Activated CD4-positive, alpha-beta memory T cell treated with anti-CD3 and anti-CD28 coated beads, Interleukin-2, amount 10 ng/mL, durations not matched to agents 7 days and 5 days (primary cell): ENCODE measurements at regions of chr3 and their contacts with region 1.

Region 1: DNA sequence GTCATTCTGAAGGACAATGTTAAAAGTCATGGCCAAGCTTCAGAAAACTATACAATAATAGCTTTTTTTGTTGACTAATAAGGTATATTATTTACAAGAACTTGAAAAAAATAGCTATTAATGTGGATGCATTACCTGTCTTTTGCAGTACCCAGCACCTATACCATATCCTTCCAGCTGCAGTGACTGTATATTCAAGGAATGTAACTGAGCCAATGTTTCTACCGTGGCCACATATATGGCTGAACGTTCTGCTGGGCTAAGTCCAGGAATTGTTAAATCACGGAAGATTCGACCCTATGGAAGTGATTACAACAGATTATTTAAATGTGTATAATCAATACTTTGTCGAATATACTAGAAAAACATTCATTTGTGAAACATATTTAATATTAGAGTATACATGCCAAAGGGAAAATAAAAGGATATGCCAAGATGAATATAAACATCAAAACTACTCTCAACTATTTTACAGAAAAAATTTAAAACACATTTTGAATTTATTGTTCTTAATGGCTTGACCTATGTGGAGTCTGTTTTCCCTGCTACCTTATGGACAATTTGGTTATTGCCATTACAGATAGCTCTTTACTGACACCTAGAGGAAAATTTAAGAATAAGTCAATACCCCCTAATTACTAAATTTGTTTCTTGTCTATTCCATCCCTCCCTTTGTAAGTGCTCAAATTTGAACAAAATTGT is 17.6 kb downstream of the ACAD11 start:
- DNase-seq: no peak
- H3K4me3 Mint-ChIP-seq: no peak overlapping the region
- H3K27ac Mint-ChIP-seq: no peak overlapping the region
- H3K4me1 Mint-ChIP-seq: peaks cover 5% of the 10 kb centered on the region
- H3K27me3 Mint-ChIP-seq: no peaks in the 10 kb centered on the region

Region 2: GRCh38 chr3:132352541-132353143 is 289.3 kb before region 1 on chr3:
- CTCF ChIA-PET with region 1: interaction called, 13 read pairs
- POLR2A ChIA-PET with region 1: interaction called, 3 read pairs
- DNase-seq: peak; percentile 70
- H3K4me3 Mint-ChIP-seq: no peak overlapping the region
- H3K27ac Mint-ChIP-seq: no peak overlapping the region
- H3K4me1 Mint-ChIP-seq: peaks cover 11% of the 10 kb centered on the region
- H3K27me3 Mint-ChIP-seq: peaks cover 1% of the 10 kb centered on the region

Region 3: GRCh38 chr3:132535575-132536441 is 106.2 kb before region 1 on chr3:
- CTCF ChIA-PET with region 1: interaction called, 100 read pairs
- POLR2A ChIA-PET with region 1: no interaction called
- DNase-seq: peak; percentile 51
- H3K4me3 Mint-ChIP-seq: no peak overlapping the region
- H3K27ac Mint-ChIP-seq: no peak overlapping the region
- H3K4me1 Mint-ChIP-seq: peaks cover 3% of the 10 kb centered on the region
- H3K27me3 Mint-ChIP-seq: no peaks in the 10 kb centered on the region

Region 4: DNA sequence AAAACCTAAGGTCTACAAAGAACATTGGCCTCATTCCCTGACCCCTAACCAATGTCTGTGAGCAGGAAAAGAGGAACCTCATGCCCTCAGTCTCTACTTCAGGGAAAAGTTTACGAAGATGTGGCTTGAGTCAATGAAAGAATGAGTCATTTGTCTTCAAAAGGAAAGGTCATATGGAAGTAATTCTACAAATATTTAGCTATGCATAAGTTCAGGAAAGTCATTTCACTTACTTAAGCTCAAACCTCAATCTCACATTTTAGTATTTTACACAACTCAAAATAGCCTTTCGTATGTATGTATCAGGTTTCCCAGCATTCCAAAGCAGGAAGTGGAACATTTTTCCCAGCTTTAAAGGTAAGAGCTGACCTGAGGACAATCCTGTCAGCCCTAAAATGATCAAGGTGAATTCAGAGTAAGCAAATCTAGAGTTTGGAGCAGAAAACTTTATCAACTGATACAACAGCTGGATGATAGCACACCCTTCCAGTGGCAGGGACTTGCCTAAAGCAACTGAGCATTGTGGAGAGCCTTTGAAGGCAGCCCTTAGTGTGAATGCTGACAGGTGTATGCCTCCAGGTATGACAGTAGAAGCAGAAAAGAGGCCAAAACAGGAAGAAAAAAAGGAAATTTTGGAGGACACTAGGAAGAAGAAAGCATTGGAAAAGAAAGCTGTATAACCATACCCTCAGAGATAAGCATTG is 98.8 kb before region 1 on chr3:
- CTCF ChIA-PET with region 1: interaction called, 100 read pairs
- POLR2A ChIA-PET with region 1: no interaction called
- DNase-seq: no peak
- H3K4me3 Mint-ChIP-seq: no peak overlapping the region
- H3K27ac Mint-ChIP-seq: no peak overlapping the region
- H3K4me1 Mint-ChIP-seq: peaks cover 21% of the 10 kb centered on the region
- H3K27me3 Mint-ChIP-seq: no peaks in the 10 kb centered on the region